ENCODE measurements at regions of chr10 and their contacts with region 1.

Region 1: GRCh38 chr10:115936926-115937767 is 335.9 kb downstream of the GFRA1 start:
- DNase-seq: peak; percentile 69
- ATAC-seq: peak; percentile 55
- H3K4me3 ChIP-seq: no peak overlapping the region
- H3K27ac ChIP-seq: no peak overlapping the region
- H3K4me1 ChIP-seq: peaks cover under 1% of the 10 kb centered on the region; the same call in 1 of the 2 replicates
- H3K27me3 ChIP-seq: no peaks in the 10 kb centered on the region
- CTCF ChIP-seq: no peak
- POLR2A ChIP-seq: no peak
- RAD21 ChIP-seq: no peak

Region 2: GRCh38 chr10:115861864-115862263 is 75.3 kb before region 1 on chr10:
- CTCF ChIA-PET with region 1: no interaction called
- POLR2A ChIA-PET with region 1: no interaction called
- dilution Hi-C with region 1: no loop called
- in situ Hi-C with region 1: no loop called
- intact Hi-C with region 1: loop called (anchors 5 kb)
- DNase-seq: peak; percentile 67
- ATAC-seq: peak; percentile 82; the same call in 1 of the 2 replicates
- H3K4me3 ChIP-seq: no peak overlapping the region
- H3K27ac ChIP-seq: no peak overlapping the region
- H3K4me1 ChIP-seq: no peaks in the 10 kb centered on the region
- H3K27me3 ChIP-seq: no peaks in the 10 kb centered on the region
- CTCF ChIP-seq: no peak
- POLR2A ChIP-seq: no peak
- RAD21 ChIP-seq: no peak

Region 3: DNA sequence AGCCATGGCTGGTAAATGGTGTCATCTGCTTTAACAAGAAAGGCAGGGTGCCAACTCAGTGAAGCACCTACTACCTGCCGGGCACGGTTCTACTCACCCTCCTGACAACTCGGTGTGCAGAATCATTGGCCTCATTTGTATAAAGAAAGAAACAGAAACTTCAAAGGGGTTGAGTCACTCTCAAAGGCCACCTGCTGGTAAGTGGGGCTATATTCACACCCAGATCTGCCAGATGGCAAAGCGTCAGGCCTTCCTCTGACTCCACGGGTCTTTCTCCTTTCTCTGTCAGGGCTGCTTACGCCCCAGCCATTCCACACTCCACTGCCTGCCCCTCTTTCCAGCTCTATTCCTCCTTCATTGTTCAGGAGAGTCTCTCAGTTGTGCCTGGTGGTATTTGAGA is 26.7 kb after region 1 on chr10:
- CTCF ChIA-PET with region 1: no interaction called
- POLR2A ChIA-PET with region 1: no interaction called
- dilution Hi-C with region 1: no loop called
- in situ Hi-C with region 1: no loop called
- intact Hi-C with region 1: loop called (anchors 2 kb)
- DNase-seq: peak; percentile 16
- ATAC-seq: no peak
- H3K4me3 ChIP-seq: no peak overlapping the region
- H3K27ac ChIP-seq: no peak overlapping the region
- H3K4me1 ChIP-seq: no peaks in the 10 kb centered on the region
- H3K27me3 ChIP-seq: peaks cover 2% of the 10 kb centered on the region; the same call in 1 of the 2 replicates
- CTCF ChIP-seq: 0 out of 2 replicates have a peak, but pooled peaks have one; percentile 11
- POLR2A ChIP-seq: no peak
- RAD21 ChIP-seq: peak; percentile 21; the same call in 1 of the 2 replicates

Measured in IMR-90 (cell line).